ENCODE measurements at regions of chr14 and their contacts with region 1.

Region 1: DNA sequence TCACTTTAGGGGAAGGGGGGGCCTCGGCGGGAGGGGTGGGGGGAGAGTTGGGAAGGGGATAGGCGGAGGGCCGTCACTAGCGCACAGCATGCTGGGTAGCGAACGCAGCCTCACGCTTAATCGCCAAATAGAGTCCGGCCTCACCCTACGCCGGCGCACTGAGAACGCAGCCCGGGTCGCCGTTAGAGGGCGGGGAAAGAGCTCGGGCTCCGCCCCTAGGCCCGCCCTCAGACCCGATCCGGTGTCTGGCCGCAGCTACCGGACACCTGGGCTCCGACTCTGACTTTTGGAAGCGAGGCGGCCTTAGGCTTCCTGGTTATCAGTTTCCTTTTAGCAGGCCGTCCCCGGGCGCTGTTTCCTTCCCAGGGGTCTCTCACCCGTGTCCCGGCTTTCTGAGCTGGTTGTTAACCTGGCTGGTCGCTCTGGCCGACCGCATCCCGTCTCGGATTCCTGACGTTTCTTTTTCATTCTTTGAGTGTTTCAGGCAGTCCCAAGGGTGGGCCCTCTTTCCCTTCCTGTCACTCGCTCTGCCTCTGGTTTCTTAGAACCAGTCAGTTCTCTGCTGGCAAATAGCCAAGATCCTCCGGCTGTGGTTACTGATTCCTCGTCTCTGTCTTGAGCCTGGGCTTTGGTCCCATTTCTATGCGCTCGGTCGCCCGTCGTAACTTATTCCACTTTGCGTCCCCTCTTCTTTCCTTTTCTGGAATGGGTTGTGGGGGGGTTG is 378 bp upstream of the STRN3 start:
- DNase-seq: peak; percentile 95
- ATAC-seq: peak; percentile 94
- H3K4me3 ChIP-seq: peak overlapping the region; percentile 85 to 98 (median 93)
- H3K4me3 Mint-ChIP-seq: peak overlapping the region; percentile 97
- H3K27ac ChIP-seq: peak overlapping the region; percentile 71 to 93
- H3K27ac Mint-ChIP-seq: peak overlapping the region; percentile 93
- H3K4me1 ChIP-seq: peaks cover 15 to 17% of the 10 kb centered on the region in 2 donors
- H3K4me1 Mint-ChIP-seq: peaks cover 40% of the 10 kb centered on the region
- H3K27me3 ChIP-seq: no peaks in the 10 kb centered on the region
- H3K27me3 Mint-ChIP-seq: no peaks in the 10 kb centered on the region
- CTCF ChIP-seq: no peak

Region 2: DNA sequence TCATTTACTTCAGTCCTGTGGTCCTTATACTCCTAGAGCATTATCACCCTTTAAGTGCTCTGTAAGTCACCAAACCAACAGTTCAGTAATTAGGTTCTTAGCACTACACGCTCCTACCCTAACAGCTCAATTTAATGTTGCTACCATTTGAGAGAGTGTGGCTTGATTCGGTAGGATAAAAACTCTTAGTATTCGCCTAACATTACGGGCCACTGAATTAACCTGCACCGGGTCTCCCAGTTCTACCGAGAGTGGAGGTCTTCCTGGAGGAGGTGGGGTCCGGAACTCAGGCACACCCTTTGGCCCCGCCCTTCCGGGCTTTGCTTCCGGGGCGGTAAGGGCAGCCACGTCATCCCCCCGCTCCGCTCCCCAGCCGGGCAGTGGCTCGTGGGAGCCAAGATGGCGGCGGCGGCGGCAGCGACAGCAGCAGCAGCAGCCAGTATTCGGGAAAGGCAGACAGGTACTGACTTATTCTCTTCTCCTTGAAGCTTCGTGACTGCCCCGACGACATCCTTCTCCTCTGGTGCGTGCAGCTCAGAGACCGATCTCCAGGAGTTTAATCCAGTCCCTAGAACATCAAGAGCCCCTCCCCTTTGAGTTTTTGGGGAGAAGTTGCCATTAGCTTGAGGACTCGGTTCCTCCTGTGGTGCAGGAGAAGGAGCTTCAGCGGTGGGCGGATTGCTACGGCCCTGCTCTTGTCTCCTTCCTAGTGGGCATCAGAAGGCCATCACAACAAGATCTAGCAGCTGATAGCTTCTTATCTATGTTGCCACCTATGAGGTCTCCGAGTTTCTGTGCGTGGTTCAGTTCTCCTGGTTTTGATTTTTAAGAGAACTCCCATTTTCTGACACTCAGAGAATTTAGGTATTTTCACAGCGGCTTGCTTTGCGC is 404.4 kb before region 1 on chr14 and contains the start of gene SCFD1:
- CTCF ChIA-PET with region 1: no interaction called
- POLR2A ChIA-PET with region 1: no interaction called
- intact Hi-C with region 1: loop called (anchors 1 kb)
- DNase-seq: peak; percentile 94
- ATAC-seq: peak; percentile 98
- H3K4me3 ChIP-seq: peak within 1 kb of the TSS; percentile 78 to 98 (median 88)
- H3K4me3 Mint-ChIP-seq: peak within 1 kb of the TSS; percentile 98
- H3K27ac ChIP-seq: peak within 1 kb of the TSS; percentile 82 to 94
- H3K27ac Mint-ChIP-seq: peak within 1 kb of the TSS; percentile 98
- H3K4me1 ChIP-seq: peaks cover 14 to 28% of the 10 kb centered on the region in 2 donors
- H3K4me1 Mint-ChIP-seq: peaks cover 47% of the 10 kb centered on the region
- H3K27me3 ChIP-seq: no peaks in the 10 kb centered on the region
- H3K27me3 Mint-ChIP-seq: no peaks in the 10 kb centered on the region
- CTCF ChIP-seq: no peak
- total RNA-seq, gene SCFD1: 73.0 and 79.0 TPM in 2 replicates

Region 3: DNA sequence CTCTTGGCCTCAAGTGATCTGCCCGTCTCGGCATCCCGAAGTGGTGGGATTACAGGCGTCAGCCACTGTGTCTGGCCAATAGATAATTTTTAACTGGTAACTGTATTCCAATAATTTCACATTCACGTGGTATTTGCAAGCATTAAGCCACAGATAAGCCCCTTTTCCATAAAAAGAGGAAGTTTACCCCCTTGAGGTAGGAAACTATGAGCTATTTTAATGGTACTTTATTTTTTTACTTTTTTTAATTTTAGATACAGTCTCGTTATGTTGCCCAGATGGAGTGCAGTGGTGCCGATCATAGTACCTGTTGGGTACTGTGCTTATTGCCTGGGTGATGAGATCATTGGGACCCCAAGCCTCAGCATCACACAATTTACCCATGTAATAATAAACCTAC is 44.0 kb before region 1 on chr14:
- CTCF ChIA-PET with region 1: interaction called, 7 read pairs
- POLR2A ChIA-PET with region 1: no interaction called
- intact Hi-C with region 1: loop called (anchors 1 kb)
- DNase-seq: peak; percentile 39
- ATAC-seq: peak; percentile 59
- H3K4me3 ChIP-seq: no peak overlapping the region
- H3K4me3 Mint-ChIP-seq: peak overlapping the region; percentile 39
- H3K27ac ChIP-seq: peak overlapping the region; percentile 3 to 67
- H3K27ac Mint-ChIP-seq: peak overlapping the region; percentile 82
- H3K4me1 ChIP-seq: peaks cover 27 to 29% of the 10 kb centered on the region in 2 donors
- H3K4me1 Mint-ChIP-seq: peaks cover 48% of the 10 kb centered on the region
- H3K27me3 ChIP-seq: no peaks in the 10 kb centered on the region
- H3K27me3 Mint-ChIP-seq: no peaks in the 10 kb centered on the region
- CTCF ChIP-seq: no peak

Region 4: DNA sequence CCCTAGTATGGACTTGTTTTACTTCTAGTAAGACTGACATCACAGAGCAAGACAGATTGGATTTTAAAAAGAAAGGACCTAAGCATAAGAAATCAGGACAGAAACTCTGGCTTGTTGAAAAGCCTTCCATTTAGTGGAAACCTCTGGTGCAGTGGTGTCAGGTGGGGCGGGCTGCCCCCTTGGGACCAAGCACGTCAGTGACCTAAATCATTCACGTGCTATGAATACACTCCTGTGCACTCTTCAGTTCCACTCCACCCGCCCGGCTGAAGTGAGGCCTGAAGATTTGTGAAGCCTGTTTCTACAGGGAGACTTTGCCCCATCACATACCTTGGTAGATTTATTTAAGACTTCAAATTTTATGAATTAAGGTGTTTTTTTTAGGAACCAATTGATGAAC is 57.8 kb after region 1 on chr14:
- CTCF ChIA-PET with region 1: interaction called, 3 read pairs
- POLR2A ChIA-PET with region 1: interaction called, 3 read pairs
- intact Hi-C with region 1: loop called (anchors 2 kb)
- DNase-seq: peak; percentile 75
- ATAC-seq: peak; percentile 94
- H3K4me3 ChIP-seq: no peak overlapping the region
- H3K4me3 Mint-ChIP-seq: no peak overlapping the region
- H3K27ac ChIP-seq: no peak overlapping the region
- H3K27ac Mint-ChIP-seq: peak overlapping the region; percentile 73
- H3K4me1 ChIP-seq: peaks cover 7 to 11% of the 10 kb centered on the region in 2 donors
- H3K4me1 Mint-ChIP-seq: peaks cover 10% of the 10 kb centered on the region
- H3K27me3 ChIP-seq: no peaks in the 10 kb centered on the region
- H3K27me3 Mint-ChIP-seq: no peaks in the 10 kb centered on the region
- CTCF ChIP-seq: no peak

Region 5: GRCh38 chr14:31420319-31421111 is 394.0 kb after region 1 on chr14 and contains the start of gene HEATR5A:
- CTCF ChIA-PET with region 1: no interaction called
- POLR2A ChIA-PET with region 1: interaction called, 4 read pairs
- intact Hi-C with region 1: loop called (anchors 10 kb)
- DNase-seq: peak; percentile 95
- ATAC-seq: peak; percentile 97
- H3K4me3 ChIP-seq: peak within 1 kb of the TSS; percentile 62 to 100 (median 95)
- H3K4me3 Mint-ChIP-seq: peak within 1 kb of the TSS; percentile 96
- H3K27ac ChIP-seq: peak within 1 kb of the TSS; percentile 30 to 75
- H3K27ac Mint-ChIP-seq: peak within 1 kb of the TSS; percentile 93
- H3K4me1 ChIP-seq: peaks cover 10 to 12% of the 10 kb centered on the region in 2 donors
- H3K4me1 Mint-ChIP-seq: peaks cover 26% of the 10 kb centered on the region
- H3K27me3 ChIP-seq: no peaks in the 10 kb centered on the region
- H3K27me3 Mint-ChIP-seq: no peaks in the 10 kb centered on the region
- CTCF ChIP-seq: peak; percentile 31
- total RNA-seq, gene HEATR5A: 19.1 and 22.1 TPM in 2 replicates

Region 6: GRCh38 chr14:31456841-31457664 is 430.5 kb after region 1 on chr14 and contains the start of gene DTD2:
- CTCF ChIA-PET with region 1: no interaction called
- POLR2A ChIA-PET with region 1: no interaction called
- intact Hi-C with region 1: loop called (anchors 1 kb)
- DNase-seq: peak; percentile 95
- ATAC-seq: peak; percentile 99
- H3K4me3 ChIP-seq: peak within 1 kb of the TSS; percentile 63 to 87 (median 71)
- H3K4me3 Mint-ChIP-seq: peak within 1 kb of the TSS; percentile 98
- H3K27ac ChIP-seq: peak within 1 kb of the TSS; percentile 72 to 82
- H3K27ac Mint-ChIP-seq: peak within 1 kb of the TSS; percentile 93
- H3K4me1 ChIP-seq: peaks cover 8 to 13% of the 10 kb centered on the region in 2 donors
- H3K4me1 Mint-ChIP-seq: peaks cover 32% of the 10 kb centered on the region
- H3K27me3 ChIP-seq: no peaks in the 10 kb centered on the region
- H3K27me3 Mint-ChIP-seq: no peaks in the 10 kb centered on the region
- CTCF ChIP-seq: no peak
- total RNA-seq, gene DTD2: 12.5 and 14.1 TPM in 2 replicates

Region 7: GRCh38 chr14:31561155-31561846 is 534.7 kb after region 1 on chr14 and contains the start of gene NUBPL:
- CTCF ChIA-PET with region 1: no interaction called
- POLR2A ChIA-PET with region 1: no interaction called
- intact Hi-C with region 1: loop called (anchors 2 kb)
- DNase-seq: peak; percentile 98
- ATAC-seq: peak; percentile 96
- H3K4me3 ChIP-seq: peak within 1 kb of the TSS; percentile 67 to 92 (median 84)
- H3K4me3 Mint-ChIP-seq: peak within 1 kb of the TSS; percentile 93
- H3K27ac ChIP-seq: peak within 1 kb of the TSS; percentile 62 to 94
- H3K27ac Mint-ChIP-seq: peak within 1 kb of the TSS; percentile 97
- H3K4me1 ChIP-seq: peaks cover 16 to 17% of the 10 kb centered on the region in 2 donors
- H3K4me1 Mint-ChIP-seq: peaks cover 25% of the 10 kb centered on the region
- H3K27me3 ChIP-seq: peaks cover 0 to 8% (median 3%) of the 10 kb centered on the region in 4 experiments
- H3K27me3 Mint-ChIP-seq: peaks cover 7% of the 10 kb centered on the region
- CTCF ChIP-seq: no peak
- total RNA-seq, gene NUBPL: 14.2 and 15.5 TPM in 2 replicates

Measured in B cell (primary cell).